PC-9 (cell line): ENCODE measurements at regions of chr21 and their contacts with region 1.

Region 1: DNA sequence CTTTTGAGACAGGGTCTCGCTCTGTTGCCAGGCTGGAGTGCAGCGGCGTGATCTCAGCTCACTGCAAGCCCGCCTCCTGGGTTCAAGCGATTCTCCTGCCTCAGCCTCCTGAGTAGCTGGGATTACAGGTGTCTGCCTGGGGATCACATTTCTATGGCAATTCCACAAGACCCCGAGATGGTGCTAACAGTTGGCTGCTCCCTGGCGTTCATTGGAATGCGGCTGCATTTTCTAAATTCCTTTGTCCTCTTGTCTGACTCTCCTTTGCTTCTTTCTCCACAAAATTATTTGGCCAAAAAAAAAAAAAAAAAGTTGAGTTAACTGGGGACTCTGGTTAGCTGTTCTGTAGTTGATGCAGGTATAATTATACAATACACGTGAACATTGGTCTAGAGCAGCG is 176.4 kb downstream of the ETS2 start:
- DNase-seq: peak; percentile 18 to 36
- H3K4me3 ChIP-seq: no peak overlapping the region
- H3K27ac ChIP-seq: no peak overlapping the region
- H3K4me1 ChIP-seq: peaks cover 15% of the 10 kb centered on the region
- H3K27me3 ChIP-seq: no peaks in the 10 kb centered on the region
- CTCF ChIP-seq: no peak

Region 2: GRCh38 chr21:38921511-38922251 is 60.4 kb before region 1 on chr21:
- CTCF ChIA-PET with region 1: no interaction called
- POLR2A ChIA-PET with region 1: interaction called, 19 read pairs
- intact Hi-C with region 1: no loop called
- DNase-seq: no peak
- H3K4me3 ChIP-seq: no peak overlapping the region
- H3K27ac ChIP-seq: 0 out of 2 replicates have a peak overlapping the region, but pooled peaks have one; percentile 44
- H3K4me1 ChIP-seq: peaks cover 24% of the 10 kb centered on the region
- H3K27me3 ChIP-seq: no peaks in the 10 kb centered on the region
- CTCF ChIP-seq: no peak